ENCODE measurements at regions of chr6 and their contacts with region 1.

Region 1: DNA sequence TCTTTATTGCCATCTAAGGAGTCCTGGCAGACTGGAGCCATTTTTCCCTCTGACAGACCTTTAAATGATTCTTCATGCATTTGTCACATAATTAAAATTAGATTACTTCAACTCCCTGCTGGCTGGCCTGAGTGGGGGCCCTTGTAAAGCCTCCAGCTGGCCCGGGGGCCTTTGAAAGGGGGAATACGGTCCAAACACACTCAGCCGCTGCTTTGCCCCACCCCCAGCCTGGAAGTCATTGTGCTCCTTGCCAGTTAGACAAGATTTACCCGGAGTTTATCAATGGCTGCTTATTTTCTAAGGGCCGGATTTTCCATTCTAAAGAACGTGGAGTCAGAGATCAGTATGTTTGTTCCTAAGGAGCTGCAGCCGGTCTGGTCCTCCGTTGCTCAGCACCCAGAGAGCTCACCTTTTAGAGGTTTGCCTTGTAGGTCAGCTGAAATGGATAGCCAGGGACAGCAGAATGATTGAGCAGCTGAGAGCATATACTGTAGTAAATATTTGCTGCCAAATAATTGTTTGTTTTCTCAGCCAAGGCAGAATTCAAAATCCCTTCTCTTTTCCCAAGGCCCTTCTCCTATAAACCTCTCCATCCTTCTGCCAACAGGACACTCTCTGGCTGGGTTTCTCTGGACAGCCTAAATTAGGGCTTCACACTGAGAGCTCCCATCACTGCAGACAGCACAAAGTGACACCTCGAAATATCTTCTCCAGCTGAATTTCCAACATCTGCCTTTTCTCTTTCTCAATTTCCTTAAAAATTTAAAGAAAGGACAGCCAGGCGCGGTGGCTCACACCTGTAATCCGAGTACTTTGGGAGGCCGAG is 68.4 kb upstream of the RBM24 start:
- DNase-seq: peak; percentile 23 to 81
- ATAC-seq: peak; percentile 60 to 81 (median 76)
- H3K4me3 ChIP-seq: peak overlapping the region; percentile 26
- H3K27ac ChIP-seq: peak overlapping the region; percentile 89
- H3K4me1 ChIP-seq: peaks cover 16% of the 10 kb centered on the region
- H3K27me3 ChIP-seq: no peaks in the 10 kb centered on the region
- CTCF ChIP-seq: no peak

Region 2: GRCh38 chr6:17269840-17270239 is 57.1 kb after region 1 on chr6:
- intact Hi-C with region 1: loop called in 1 of 2 experiments (anchors 5 kb)
- DNase-seq: no peak
- ATAC-seq: peak; percentile 82 to 89 (median 88)
- H3K4me3 ChIP-seq: no peak overlapping the region
- H3K27ac ChIP-seq: peak overlapping the region; percentile 83
- H3K4me1 ChIP-seq: peaks cover 31% of the 10 kb centered on the region
- H3K27me3 ChIP-seq: no peaks in the 10 kb centered on the region
- CTCF ChIP-seq: no peak